ENCODE measurements at regions of chr14 and their contacts with region 1.

Region 1: GRCh38 chr14:23120541-23121251 is 1.6 kb upstream of the CEBPE start:
- DNase-seq: peak; percentile 81 to 92
- ATAC-seq: peak; percentile 86 to 95
- H3K4me3 ChIP-seq: no peak overlapping the region
- H3K27ac ChIP-seq: no peak overlapping the region; a peak in 1 of 6 replicates
- H3K4me1 ChIP-seq: peaks cover 2% of the 10 kb centered on the region; the same call in 2 of the 3 replicates
- CTCF ChIP-seq: peak; percentile 100
- EP300 ChIP-seq: no peak
- POLR2A ChIP-seq: no peak
- RAD21 ChIP-seq: peak; percentile 99

Region 2: GRCh38 chr14:23068476-23069412 is 52.0 kb before region 1 on chr14:
- CTCF ChIA-PET with region 1: interaction called, 118 read pairs
- POLR2A ChIA-PET with region 1: no interaction called
- DNase-seq: peak; percentile 94 to 95
- ATAC-seq: peak; percentile 72 to 86
- H3K4me3 ChIP-seq: no peak overlapping the region
- H3K27ac ChIP-seq: peak overlapping the region in 1 of 2 experiments; percentile 34; a peak in 2 of 6 replicates
- H3K4me1 ChIP-seq: peaks cover 32% of the 10 kb centered on the region
- CTCF ChIP-seq: peak; percentile 99
- EP300 ChIP-seq: no peak
- POLR2A ChIP-seq: no peak
- RAD21 ChIP-seq: peak; percentile 79

Region 3: DNA sequence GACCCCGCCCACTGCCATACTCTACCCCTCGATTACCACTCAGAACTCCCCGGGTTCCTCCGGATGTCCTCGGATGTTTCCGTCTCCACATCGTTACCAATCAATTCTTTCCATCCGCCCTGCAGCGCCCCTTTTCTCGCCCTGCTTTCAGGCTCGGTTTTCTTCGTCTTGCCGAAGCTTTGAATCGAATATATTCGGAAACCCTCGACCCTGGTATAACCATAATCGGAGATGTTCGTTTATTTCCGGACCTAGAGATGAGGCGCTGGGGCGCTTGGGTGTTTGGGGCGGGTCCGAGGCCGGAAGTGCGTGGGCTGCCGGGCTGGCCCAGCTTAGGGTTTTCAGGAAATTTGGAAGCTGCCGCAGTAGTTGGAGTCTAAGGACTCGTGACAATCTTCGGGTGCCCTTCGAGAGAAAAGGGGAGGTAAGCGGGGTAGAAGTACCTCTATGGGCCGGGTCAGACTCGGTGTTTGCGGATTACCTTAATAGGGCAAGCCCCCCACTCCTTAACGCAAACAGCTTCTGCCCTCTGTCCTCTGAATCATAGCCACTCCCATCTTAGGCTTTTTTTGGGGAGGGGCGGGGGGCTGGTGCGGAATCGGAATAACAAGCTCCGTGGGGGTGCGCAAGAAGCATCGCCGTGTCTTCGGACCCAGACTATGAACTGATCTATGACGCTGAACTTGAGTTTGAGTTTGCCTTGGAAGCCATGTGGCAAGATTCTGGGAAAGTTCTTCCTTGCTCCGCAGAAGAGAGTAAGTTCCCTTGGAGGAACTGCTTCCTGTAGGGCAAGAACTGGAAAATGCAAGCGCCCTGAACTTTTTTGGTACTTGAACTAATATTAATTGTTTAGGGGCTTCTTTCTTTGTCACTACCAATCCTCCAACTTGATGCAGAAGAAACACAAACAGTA is 25.2 kb before region 1 on chr14 and contains the start of gene C14orf119:
- CTCF ChIA-PET with region 1: interaction called, 20 read pairs
- POLR2A ChIA-PET with region 1: interaction called, 7 read pairs
- DNase-seq: peak; percentile 98
- ATAC-seq: peak; percentile 90 to 93
- H3K4me3 ChIP-seq: peak within 1 kb of the TSS; percentile 62
- H3K27ac ChIP-seq: peak within 1 kb of the TSS; percentile 89 to 97
- H3K4me1 ChIP-seq: peaks cover 23% of the 10 kb centered on the region
- CTCF ChIP-seq: no peak
- EP300 ChIP-seq: no peak
- POLR2A ChIP-seq: peak; percentile 81
- RAD21 ChIP-seq: no peak
- polyA plus RNA-seq, gene C14orf119: 82.5 and 107 TPM in 2 replicates

Region 4: DNA sequence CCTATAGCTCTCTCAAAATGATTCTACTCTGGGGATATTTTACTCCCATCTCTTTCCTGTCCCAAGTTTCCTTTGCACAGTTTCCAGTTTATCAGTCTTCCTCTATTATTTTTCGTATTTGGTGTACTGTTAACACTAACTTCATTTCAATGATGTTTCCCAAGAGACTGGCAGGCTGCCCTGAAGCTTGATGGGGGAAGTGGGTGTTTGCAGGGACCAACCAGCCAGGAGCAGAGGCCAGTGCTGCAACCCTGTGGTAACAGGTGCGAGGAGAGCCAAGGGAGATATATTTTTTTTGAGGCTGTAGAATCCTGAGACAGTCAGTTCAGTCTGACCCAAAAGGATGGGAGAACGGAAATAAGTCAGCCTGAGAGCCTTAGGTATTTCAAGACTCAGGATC is 10.2 kb after region 1 on chr14:
- CTCF ChIA-PET with region 1: interaction called, 80 read pairs
- POLR2A ChIA-PET with region 1: no interaction called
- DNase-seq: no peak
- ATAC-seq: no peak
- H3K4me3 ChIP-seq: no peak overlapping the region
- H3K27ac ChIP-seq: no peak overlapping the region
- H3K4me1 ChIP-seq: no peaks in the 10 kb centered on the region
- CTCF ChIP-seq: no peak
- EP300 ChIP-seq: no peak
- POLR2A ChIP-seq: no peak
- RAD21 ChIP-seq: no peak

Region 5: DNA sequence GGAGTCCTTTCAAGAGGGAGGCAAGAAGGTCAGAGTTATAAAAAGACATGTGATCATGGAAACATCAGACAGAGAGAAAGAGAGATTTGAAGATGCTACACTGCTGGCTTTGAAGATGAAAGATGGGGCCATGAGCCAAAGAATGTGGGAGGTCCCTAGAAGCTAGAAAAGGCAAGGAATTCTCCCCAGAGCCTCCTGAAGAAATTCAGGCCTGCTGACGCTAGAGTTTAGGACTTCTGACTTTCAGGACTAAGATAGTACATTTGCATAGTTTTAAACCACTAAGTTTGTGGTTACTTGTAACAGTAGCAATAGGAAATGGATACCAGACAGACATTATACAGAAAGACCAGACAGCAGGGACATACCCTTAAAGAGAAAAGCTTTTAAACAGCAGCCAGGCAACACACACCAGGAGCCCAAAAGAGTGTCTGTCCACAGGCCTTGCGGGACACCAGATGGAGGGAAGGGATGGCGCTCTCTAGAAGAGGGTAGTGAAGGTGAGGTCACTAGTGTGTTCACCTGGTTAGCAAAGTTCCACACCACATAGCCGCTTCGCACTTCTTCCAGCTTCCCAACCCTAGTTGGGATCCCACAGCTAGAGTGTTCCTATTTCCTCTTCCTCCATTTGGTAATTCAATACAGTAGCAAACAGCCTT is 28.0 kb after region 1 on chr14:
- CTCF ChIA-PET with region 1: interaction called, 80 read pairs
- POLR2A ChIA-PET with region 1: no interaction called
- DNase-seq: no peak
- ATAC-seq: no peak
- H3K4me3 ChIP-seq: no peak overlapping the region
- H3K27ac ChIP-seq: no peak overlapping the region; a peak in 1 of 6 replicates
- H3K4me1 ChIP-seq: peaks cover 28% of the 10 kb centered on the region
- CTCF ChIP-seq: no peak
- EP300 ChIP-seq: no peak
- POLR2A ChIP-seq: no peak
- RAD21 ChIP-seq: no peak

Region 6: GRCh38 chr14:23186913-23187654 is 66.4 kb after region 1 on chr14:
- CTCF ChIA-PET with region 1: interaction called, 848 read pairs
- POLR2A ChIA-PET with region 1: interaction called, 6 read pairs
- DNase-seq: peak; percentile 64 to 74
- ATAC-seq: peak; percentile 63 to 83; a peak in 5 of 6 replicates
- H3K4me3 ChIP-seq: no peak overlapping the region
- H3K27ac ChIP-seq: no peak overlapping the region
- H3K4me1 ChIP-seq: 0 out of 3 replicates have a peak, but pooled peaks cover 3% of the 10 kb centered on the region
- CTCF ChIP-seq: peak; percentile 93
- EP300 ChIP-seq: no peak
- POLR2A ChIP-seq: no peak
- RAD21 ChIP-seq: peak; percentile 92 to 96

Region 7: GRCh38 chr14:23258256-23258655 is 137.6 kb after region 1 on chr14:
- CTCF ChIA-PET with region 1: interaction called, 13 read pairs
- POLR2A ChIA-PET with region 1: no interaction called
- DNase-seq: no peak
- ATAC-seq: no peak
- H3K4me3 ChIP-seq: no peak overlapping the region
- H3K27ac ChIP-seq: no peak overlapping the region
- H3K4me1 ChIP-seq: no peaks in the 10 kb centered on the region
- CTCF ChIP-seq: no peak
- EP300 ChIP-seq: no peak
- POLR2A ChIP-seq: no peak
- RAD21 ChIP-seq: no peak

Measured in A549 (cell line).